Naive thymus-derived CD4-positive, alpha-beta T cell (primary cell): ENCODE measurements at regions of chr2 and their contacts with region 1.

Region 1: DNA sequence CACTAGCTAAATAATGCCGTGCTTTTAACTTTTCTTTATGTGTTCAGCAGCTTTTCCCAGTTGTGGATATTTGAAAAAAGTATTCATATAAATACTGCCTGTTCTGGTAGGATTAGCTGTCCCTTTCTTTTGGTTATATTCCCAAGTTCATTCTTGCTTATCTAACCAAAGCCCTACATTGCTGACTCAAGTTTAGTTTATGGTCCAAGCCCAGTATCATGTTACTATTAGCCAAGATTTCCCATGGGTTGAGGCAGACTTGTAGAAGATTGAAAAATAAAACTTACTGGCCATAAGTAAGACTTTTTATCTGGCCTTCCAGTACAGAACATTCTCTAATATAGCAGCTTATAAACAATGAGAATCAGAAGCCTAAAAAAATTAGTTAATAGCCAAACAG is 49.7 kb upstream of the NFE2L2 start:
- DNase-seq: no peak
- ATAC-seq: no peak
- H3K4me3 ChIP-seq: no peak overlapping the region
- H3K4me3 Mint-ChIP-seq: no peak overlapping the region
- H3K27ac ChIP-seq: no peak overlapping the region
- H3K27ac Mint-ChIP-seq: peak overlapping the region in 7 of 9 donors; percentile 36 to 97 (median 73)
- H3K4me1 ChIP-seq: peaks cover 6 to 13% of the 10 kb centered on the region in 2 donors
- H3K4me1 Mint-ChIP-seq: peaks cover 17 to 54% (median 31%) of the 10 kb centered on the region in 7 donors
- H3K27me3 ChIP-seq: no peaks in the 10 kb centered on the region
- H3K27me3 Mint-ChIP-seq: no peaks in the 10 kb centered on the region

Region 2: DNA sequence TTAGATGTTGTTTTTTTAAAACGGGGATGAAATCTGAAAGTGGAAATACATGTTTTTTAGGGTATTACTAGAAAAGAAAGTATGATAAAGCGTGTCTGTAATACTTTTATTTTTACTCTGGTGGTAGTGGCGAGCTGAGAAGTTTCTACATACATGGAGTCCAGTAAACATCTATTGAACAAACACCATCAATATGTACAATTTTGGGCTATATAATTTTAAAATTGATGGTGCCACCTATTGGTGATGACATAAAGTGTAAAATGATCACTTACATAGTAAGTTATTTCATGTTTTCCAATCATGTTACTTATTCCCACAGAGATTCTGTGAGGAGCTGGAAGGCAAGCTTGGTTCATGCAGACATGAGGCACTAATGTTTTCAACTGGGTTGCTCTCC is 18.2 kb before region 1 on chr2:
- CTCF ChIA-PET with region 1: interaction called, 6 read pairs
- POLR2A ChIA-PET with region 1: interaction called, 12 read pairs
- intact Hi-C with region 1: loop called in 1 of 2 experiments (anchors 1 kb)
- DNase-seq: peak in 6 of 9 donors; percentile 27 to 52 (median 41)
- ATAC-seq: peak; percentile 70
- H3K4me3 ChIP-seq: no peak overlapping the region
- H3K4me3 Mint-ChIP-seq: no peak overlapping the region
- H3K27ac ChIP-seq: no peak overlapping the region
- H3K27ac Mint-ChIP-seq: peak overlapping the region in 3 of 9 donors; percentile 22 to 56 (median 32)
- H3K4me1 ChIP-seq: peaks cover 0 to 1% of the 10 kb centered on the region in 2 donors
- H3K4me1 Mint-ChIP-seq: peaks cover 0 to 34% (median 23%) of the 10 kb centered on the region in 7 donors
- H3K27me3 ChIP-seq: no peaks in the 10 kb centered on the region
- H3K27me3 Mint-ChIP-seq: no peaks in the 10 kb centered on the region

Region 3: GRCh38 chr2:177326005-177326404 is 11.8 kb after region 1 on chr2:
- CTCF ChIA-PET with region 1: interaction called, 4 read pairs
- POLR2A ChIA-PET with region 1: interaction called, 18 read pairs
- intact Hi-C with region 1: loop called in 1 of 2 experiments (anchors 1 kb)
- DNase-seq: no peak
- ATAC-seq: no peak
- H3K4me3 ChIP-seq: no peak overlapping the region
- H3K4me3 Mint-ChIP-seq: no peak overlapping the region
- H3K27ac ChIP-seq: no peak overlapping the region
- H3K27ac Mint-ChIP-seq: no peak overlapping the region
- H3K4me1 ChIP-seq: peaks cover 0 to 19% of the 10 kb centered on the region in 2 donors
- H3K4me1 Mint-ChIP-seq: peaks cover 0 to 16% (median 6%) of the 10 kb centered on the region in 7 donors
- H3K27me3 ChIP-seq: no peaks in the 10 kb centered on the region
- H3K27me3 Mint-ChIP-seq: no peaks in the 10 kb centered on the region

Region 4: DNA sequence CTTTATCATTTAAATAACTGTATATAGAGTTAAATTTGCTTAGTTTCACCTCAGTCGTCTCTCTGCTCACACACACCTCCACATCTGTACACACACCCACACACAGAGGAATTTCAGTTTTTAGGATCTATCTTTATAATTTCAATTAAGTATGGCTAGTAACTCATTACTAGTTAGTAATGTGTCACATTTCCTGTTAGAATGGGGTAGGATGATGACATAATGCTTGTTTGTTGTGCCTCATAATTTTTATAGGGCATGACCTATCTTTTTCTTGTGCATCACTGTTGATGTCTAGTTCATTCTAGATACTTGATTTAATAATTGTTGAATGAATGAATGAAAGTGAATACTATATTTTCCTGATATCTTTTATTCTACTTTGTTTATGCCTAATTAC is 187.0 kb after region 1 on chr2:
- CTCF ChIA-PET with region 1: no interaction called
- POLR2A ChIA-PET with region 1: no interaction called
- intact Hi-C with region 1: no loop called
- DNase-seq: no peak
- ATAC-seq: no peak
- H3K4me3 ChIP-seq: no peak overlapping the region
- H3K4me3 Mint-ChIP-seq: no peak overlapping the region
- H3K27ac ChIP-seq: no peak overlapping the region
- H3K27ac Mint-ChIP-seq: no peak overlapping the region
- H3K4me1 ChIP-seq: no peaks in the 10 kb centered on the region
- H3K4me1 Mint-ChIP-seq: peaks cover 0 to 9% (median 0%) of the 10 kb centered on the region in 7 donors
- H3K27me3 ChIP-seq: no peaks in the 10 kb centered on the region
- H3K27me3 Mint-ChIP-seq: no peaks in the 10 kb centered on the region